OCI-LY7 (cell line): ENCODE measurements at regions of chr16 and their contacts with region 1.

Region 1: DNA sequence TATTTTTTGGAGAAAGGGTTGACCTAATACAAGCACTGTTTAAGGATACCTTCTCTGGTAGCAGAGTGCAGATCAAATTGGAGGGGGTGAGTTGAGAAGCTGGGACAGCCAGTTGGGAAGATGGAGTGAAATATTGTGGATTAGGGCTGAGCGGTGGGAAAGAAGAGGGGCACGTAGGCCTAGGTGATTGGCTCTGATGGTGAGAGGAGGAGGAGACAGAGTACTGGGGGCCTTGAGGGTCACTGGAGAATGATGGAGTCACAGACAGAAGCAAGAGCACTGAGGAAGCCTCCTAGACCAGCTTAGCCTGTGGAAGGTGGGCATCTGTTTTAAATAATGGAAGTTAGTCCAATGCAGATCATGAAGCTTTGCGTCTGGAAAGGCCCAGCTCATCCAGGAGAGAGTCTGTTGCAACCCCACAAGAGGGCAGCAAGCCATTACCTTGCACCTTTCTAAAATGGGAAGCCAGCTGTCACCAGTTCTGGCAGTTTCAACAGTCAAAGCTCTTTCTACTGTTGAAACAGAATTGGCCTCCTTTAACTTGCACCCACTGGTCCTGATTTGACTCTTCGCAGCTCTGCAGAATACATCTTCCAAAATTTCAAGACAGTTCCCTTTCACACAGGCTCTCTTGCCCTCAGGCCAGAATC is 11.8 kb downstream of the SLC9A5 start:
- DNase-seq: peak; percentile 77
- H3K4me3 ChIP-seq: no peak overlapping the region
- H3K27ac ChIP-seq: no peak overlapping the region
- H3K4me1 ChIP-seq: peaks cover 5% of the 10 kb centered on the region
- CTCF ChIP-seq: peak; percentile 84

Region 2: GRCh38 chr16:67470359-67470758 is 209.8 kb after region 1 on chr16:
- CTCF ChIA-PET with region 1: no interaction called
- POLR2A ChIA-PET with region 1: no interaction called
- intact Hi-C with region 1: loop called (anchors 5 kb)
- DNase-seq: no peak
- H3K4me3 ChIP-seq: no peak overlapping the region
- H3K27ac ChIP-seq: no peak overlapping the region
- H3K4me1 ChIP-seq: peaks cover 13% of the 10 kb centered on the region
- CTCF ChIP-seq: no peak

Region 3: DNA sequence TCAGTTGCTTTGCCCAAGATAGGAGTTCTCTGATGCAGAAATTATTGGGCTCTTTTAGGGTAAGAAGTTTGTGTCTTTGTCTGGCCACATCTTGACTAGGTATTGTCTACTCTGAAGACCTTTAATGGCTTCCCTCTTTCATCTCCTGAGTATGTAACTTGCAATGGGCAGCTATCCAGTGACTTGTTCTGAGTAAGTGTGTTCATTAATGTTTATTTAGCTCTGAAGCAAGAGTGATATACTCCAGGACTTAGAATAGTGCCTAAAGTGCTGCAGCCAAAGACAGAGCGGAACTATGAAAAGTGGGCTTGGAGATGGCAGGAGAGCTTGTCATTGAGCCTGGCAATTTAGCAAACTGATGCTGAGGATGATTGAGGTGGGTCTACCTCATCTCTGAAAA is 1574.0 kb after region 1 on chr16:
- CTCF ChIA-PET with region 1: no interaction called
- POLR2A ChIA-PET with region 1: no interaction called
- intact Hi-C with region 1: no loop called
- DNase-seq: no peak
- H3K4me3 ChIP-seq: no peak overlapping the region
- H3K27ac ChIP-seq: no peak overlapping the region
- H3K4me1 ChIP-seq: no peaks in the 10 kb centered on the region
- CTCF ChIP-seq: no peak